Mammary epithelial cell (primary cell): ENCODE measurements at regions of chr11 and their contacts with region 1.

Region 1: GRCh38 chr11:10366568-10367370 is 61.9 kb downstream of the ADM start:
- DNase-seq: peak; percentile 93
- H3K4me3 ChIP-seq: no peak overlapping the region
- H3K27ac ChIP-seq: peak overlapping the region; percentile 5
- H3K4me1 ChIP-seq: peaks cover 6% of the 10 kb centered on the region
- H3K27me3 ChIP-seq: no peaks in the 10 kb centered on the region
- CTCF ChIP-seq: peak; percentile 97

Region 2: DNA sequence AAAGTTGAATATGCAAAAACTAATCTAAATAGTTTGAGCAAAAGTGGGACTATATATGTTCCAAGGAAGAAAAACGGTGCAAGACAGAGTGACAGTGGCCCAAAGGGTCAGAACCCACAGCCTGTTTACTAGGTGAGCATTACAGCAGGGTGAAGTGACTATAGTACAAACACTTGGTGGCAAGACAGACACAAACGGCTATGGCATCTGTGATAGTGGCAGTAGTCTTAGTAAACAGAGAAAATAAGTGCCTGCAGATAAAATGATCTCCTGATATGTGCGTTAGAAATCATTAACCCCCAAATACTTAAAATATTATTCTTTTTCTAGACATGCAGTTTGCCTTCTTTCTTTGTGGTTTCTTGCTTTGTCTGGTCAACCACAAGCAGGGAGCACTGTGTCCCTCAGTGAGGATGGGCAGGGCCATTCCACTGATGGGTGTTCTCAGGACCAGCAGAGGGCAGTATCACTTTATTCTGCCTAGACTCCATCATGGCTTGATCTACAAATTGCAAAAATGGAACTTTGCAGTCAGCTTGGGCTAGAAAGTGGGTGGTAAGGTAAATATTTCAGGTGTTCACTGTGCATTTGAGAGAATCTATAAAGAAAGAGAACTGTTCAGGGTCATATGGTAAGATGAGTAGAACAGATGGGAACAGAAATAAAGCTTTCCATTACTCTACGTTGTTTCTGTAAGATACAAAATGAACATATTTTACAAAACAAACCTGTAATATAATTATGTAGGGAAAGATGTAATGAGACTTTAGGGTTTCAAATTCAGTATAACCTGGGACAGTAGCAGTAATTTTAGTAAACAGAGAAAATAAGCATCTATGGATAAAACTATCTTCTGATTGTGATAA is 504.7 kb before region 1 on chr11:
- CTCF ChIA-PET with region 1: no interaction called
- dilution Hi-C with region 1: no loop called
- in situ Hi-C with region 1: no loop called
- intact Hi-C with region 1: loop called (anchors 2 kb)
- DNase-seq: peak; percentile 60
- H3K4me3 ChIP-seq: no peak overlapping the region
- H3K27ac ChIP-seq: no peak overlapping the region
- H3K4me1 ChIP-seq: peaks cover 6% of the 10 kb centered on the region
- H3K27me3 ChIP-seq: no peaks in the 10 kb centered on the region
- CTCF ChIP-seq: peak; percentile 90 to 91

Region 3: GRCh38 chr11:9972989-9973388 is 393.8 kb before region 1 on chr11:
- CTCF ChIA-PET with region 1: no interaction called
- dilution Hi-C with region 1: no loop called
- in situ Hi-C with region 1: no loop called
- intact Hi-C with region 1: loop called (anchors 10 kb)
- DNase-seq: peak; percentile 39
- H3K4me3 ChIP-seq: no peak overlapping the region
- H3K27ac ChIP-seq: no peak overlapping the region
- H3K4me1 ChIP-seq: no peaks in the 10 kb centered on the region
- H3K27me3 ChIP-seq: no peaks in the 10 kb centered on the region
- CTCF ChIP-seq: peak; percentile 75 to 83

Region 4: GRCh38 chr11:10181811-10182210 is 185.0 kb before region 1 on chr11:
- CTCF ChIA-PET with region 1: no interaction called
- dilution Hi-C with region 1: no loop called
- in situ Hi-C with region 1: no loop called
- intact Hi-C with region 1: loop called (anchors 1 kb)
- DNase-seq: no peak
- H3K4me3 ChIP-seq: no peak overlapping the region
- H3K27ac ChIP-seq: no peak overlapping the region
- H3K4me1 ChIP-seq: no peaks in the 10 kb centered on the region
- H3K27me3 ChIP-seq: no peaks in the 10 kb centered on the region
- CTCF ChIP-seq: peak; percentile 24 to 26

Region 5: DNA sequence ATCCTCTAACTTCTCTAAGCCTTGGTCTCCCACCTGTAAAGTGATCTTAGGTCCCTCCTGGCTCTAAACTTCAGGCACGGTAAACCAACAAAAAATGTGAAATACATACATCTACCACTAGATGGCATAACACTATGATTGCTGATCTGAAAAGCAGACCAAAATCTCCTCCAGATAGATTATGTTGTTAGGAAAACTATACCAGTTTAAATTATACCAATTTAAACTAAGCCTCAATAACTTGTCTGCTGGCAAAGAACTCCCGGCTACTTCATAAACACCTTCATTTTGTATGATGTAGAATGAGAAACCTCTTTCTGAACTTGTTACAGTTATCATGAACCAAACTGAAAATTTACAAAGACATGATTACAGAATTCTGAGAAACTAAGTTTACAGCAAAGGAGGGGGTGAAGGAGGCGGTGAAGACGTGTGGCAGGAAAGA is 158.6 kb before region 1 on chr11:
- CTCF ChIA-PET with region 1: interaction called, 6 read pairs
- dilution Hi-C with region 1: no loop called
- in situ Hi-C with region 1: no loop called
- intact Hi-C with region 1: loop called (anchors 2 kb)
- DNase-seq: peak; percentile 44
- H3K4me3 ChIP-seq: no peak overlapping the region
- H3K27ac ChIP-seq: no peak overlapping the region
- H3K4me1 ChIP-seq: no peaks in the 10 kb centered on the region
- H3K27me3 ChIP-seq: no peaks in the 10 kb centered on the region
- CTCF ChIP-seq: peak; percentile 62 to 65

Region 6: GRCh38 chr11:10263929-10264328 is 102.8 kb before region 1 on chr11:
- CTCF ChIA-PET with region 1: no interaction called
- dilution Hi-C with region 1: no loop called
- in situ Hi-C with region 1: no loop called
- intact Hi-C with region 1: no loop called
- DNase-seq: peak; percentile 16
- H3K4me3 ChIP-seq: no peak overlapping the region
- H3K27ac ChIP-seq: no peak overlapping the region
- H3K4me1 ChIP-seq: no peaks in the 10 kb centered on the region
- H3K27me3 ChIP-seq: no peaks in the 10 kb centered on the region
- CTCF ChIP-seq: no peak

Region 7: DNA sequence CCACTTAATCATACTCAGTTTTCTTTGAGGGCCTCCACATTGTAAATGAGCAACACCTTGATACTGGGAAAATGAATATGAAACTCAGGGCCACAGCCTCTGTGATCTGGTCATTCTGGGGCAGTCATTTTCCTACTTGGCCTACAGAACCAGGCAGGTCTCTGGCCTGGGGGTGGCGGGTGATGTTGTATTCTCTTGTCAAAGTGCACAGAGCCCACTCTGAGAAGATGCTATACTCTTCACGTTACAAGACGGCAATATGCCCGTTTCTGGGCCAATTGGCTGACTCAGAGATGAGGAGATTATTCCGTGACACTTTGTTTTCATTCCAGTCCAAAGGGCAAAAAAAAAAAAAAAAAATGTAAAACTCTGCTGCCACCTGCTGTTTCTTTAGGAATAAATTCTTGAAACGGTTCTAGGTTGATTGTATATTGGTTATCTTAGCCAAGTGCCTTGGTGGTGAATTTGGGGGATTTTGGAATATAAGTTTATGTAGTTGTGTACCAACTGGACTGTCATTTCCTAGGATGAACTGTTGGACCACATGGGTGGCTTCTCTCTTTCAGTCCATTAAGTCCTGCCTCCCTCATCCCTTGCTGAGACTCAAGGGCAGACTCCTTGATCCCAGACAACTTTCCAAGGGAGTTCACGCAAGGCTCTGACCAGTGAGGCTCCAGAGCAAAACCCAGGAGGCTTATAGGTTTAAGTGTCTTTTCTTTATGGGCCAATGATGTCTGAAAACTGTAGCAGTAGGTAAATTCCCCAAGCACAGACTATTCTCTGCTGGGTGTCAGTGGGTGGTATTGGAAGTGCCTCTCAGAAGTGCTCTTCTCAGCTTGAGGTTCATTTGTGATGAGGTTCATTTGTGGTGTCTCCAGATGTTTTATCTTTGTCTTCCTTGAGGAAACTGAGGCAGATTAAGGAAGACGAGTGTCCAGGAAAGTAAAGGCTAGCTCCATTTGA is 43.7 kb before region 1 on chr11:
- CTCF ChIA-PET with region 1: no interaction called
- dilution Hi-C with region 1: no loop called
- in situ Hi-C with region 1: no loop called
- intact Hi-C with region 1: loop called (anchors 1 kb)
- DNase-seq: peak; percentile 84
- H3K4me3 ChIP-seq: no peak overlapping the region
- H3K27ac ChIP-seq: peak overlapping the region; percentile 57
- H3K4me1 ChIP-seq: peaks cover 6% of the 10 kb centered on the region
- H3K27me3 ChIP-seq: no peaks in the 10 kb centered on the region
- CTCF ChIP-seq: peak; percentile 42 to 49